Posterior vena cava (tissue), 2 donors: ENCODE measurements at regions of chr13 and their contacts with region 1.

Region 1: DNA sequence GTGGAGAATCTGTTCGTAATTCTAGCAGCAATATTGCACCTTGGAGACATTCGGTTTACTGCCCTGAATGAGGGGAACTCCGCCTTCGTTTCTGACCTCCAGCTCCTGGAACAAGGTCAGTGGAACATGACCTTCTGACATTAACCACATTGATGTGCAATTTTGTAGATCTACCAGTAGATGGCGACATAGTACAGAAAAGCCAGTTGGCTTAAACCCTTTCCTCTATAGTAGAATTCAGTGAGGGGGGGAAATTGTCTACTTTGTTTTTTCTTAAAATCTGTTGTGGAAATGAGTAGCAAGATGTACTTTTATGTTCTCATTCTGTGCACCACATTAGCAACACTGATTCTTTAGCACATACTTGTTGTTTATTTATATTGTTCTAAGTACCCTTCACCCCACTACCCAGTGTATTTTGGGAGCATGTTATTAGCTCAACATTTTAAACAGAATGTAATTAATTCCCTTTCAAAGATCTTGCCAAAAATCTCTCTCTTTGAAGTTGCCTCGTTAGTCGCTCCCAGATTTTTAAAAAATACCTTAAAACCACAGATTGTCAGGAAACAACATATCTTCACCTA is 332.2 kb downstream of the MYO16 start:
- DNase-seq: no peak

Region 2: GRCh38 chr13:109786457-109787134 is 825.0 kb after region 1 on chr13 and contains the start of gene IRS2:
- intact Hi-C with region 1: loop called (anchors 10 kb)
- DNase-seq: peak; percentile 97
- total RNA-seq, gene IRS2: 15.9 to 25.1 TPM